Activated naive CD4-positive, alpha-beta T cell treated with anti-CD3 and anti-CD28 coated beads, Interleukin-2, amount 10 ng/mL, durations not matched to agents 7 days and 5 days (primary cell): ENCODE measurements at regions of chr1 and their contacts with region 1.

Region 1: DNA sequence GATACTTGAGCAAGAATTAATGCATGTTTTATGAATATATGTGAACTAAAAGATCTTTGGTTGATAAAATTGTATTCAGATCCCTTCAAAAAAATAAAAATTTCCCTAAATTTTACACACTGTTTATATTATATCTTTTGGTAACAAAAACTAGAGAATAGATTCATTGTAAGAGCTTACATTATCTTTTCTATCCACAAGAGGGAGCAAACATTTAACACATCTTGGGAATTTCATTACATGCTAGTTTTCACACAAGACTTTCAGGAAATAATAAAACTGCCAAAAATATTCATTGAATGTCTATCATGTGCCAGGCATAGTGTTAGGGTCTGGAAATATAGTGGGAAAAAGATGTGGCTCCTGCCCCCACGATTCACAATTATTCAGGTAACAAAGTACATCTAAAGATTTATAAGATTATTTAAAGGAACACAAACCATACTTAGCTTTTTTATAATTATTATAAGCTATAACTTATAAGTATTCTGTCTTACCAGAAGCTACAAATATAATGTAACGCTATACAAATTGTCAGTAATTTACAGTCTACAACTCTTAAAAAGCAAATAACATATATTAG is 30.6 kb downstream of the FAF1 start:
- DNase-seq: no peak
- H3K4me3 Mint-ChIP-seq: no peak overlapping the region
- H3K27ac Mint-ChIP-seq: no peak overlapping the region
- H3K4me1 Mint-ChIP-seq: peaks cover 13% of the 10 kb centered on the region
- H3K27me3 Mint-ChIP-seq: no peaks in the 10 kb centered on the region

Region 2: DNA sequence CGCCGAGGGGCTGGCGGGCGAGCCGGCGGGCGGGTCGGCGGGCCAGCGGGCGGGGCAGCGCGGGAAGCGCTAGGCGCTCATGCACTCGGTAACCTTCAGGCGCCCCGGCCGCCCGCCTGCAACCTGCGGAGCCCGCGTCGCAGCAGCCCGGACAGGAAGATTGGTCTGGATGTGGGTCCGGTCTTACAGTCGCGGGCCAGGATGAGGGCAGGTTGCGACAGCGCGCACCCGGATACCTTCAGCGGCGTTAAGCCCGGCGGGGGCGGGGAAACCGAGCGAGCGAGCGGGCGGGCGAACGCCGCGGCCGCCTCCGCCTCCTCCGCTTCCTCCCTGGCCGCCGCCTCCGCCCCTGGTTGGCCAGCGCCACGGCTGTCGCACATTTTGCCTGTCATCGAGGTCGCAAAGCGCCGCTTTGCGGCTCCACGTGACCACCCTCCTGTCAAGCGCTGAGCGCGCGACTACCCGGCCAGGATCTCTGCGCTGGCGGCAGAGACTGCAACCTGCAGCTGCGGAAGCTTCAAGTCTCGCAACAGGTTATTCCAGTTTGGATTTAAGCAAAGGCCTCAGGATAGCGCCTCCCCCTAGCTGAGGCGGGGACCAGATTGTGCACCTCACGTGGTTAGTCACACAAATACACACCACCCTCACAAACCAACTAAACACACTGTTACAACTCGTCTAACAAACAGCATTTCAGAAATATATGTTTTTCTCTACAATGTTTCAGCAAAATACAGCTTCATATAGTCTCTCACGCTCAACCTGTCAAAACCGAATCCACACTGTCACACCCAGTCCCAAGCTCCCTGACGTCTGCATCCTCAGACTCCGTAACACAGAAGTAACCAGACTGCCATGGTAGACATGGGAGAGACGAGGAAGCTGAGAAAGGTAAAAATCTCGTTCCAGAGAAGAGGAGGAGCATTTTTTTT is 30.7 kb after region 1 on chr1 and contains the start of gene FAF1:
- CTCF ChIA-PET with region 1: interaction called, 10 read pairs
- DNase-seq: peak; percentile 98
- H3K4me3 Mint-ChIP-seq: peak within 1 kb of the TSS; percentile 80
- H3K27ac Mint-ChIP-seq: peak within 1 kb of the TSS; percentile 92
- H3K4me1 Mint-ChIP-seq: peaks cover 29% of the 10 kb centered on the region
- H3K27me3 Mint-ChIP-seq: peaks cover 10% of the 10 kb centered on the region